Gastrocnemius medialis (tissue), 4 donors: ENCODE measurements at regions of chr12 and their contacts with region 1.

Region 1: DNA sequence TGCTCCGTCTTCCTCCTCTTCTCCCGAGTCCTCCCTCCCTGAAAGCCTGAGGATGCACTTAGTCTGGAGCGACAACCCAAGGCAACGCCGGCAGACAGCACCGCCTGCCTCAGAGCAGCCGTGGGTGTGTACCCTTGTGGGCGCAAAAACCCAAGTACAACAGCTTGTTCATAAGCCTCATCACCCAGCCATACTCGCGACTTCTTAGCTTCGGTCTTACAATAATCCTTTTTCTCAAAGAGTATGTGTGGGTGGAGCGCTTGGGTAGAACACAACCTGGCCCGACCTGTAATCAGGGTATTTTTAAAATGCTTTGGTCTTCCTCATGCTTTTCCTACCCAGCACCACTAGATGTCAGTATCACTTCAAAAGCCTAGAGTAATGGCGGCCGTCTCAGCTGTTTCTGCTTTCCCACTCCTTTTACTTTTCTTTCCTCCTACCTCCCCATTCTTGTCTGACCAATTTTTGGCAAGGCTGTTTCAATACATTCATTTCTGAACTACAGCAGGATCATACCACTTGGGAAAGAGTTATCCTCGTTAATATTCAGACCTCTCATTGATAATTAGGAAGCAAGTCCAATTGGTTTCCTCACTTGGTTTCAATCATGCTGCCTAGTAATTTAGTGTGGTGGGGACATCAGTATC is 198.9 kb downstream of the EPS8 start:
- DNase-seq: peak; percentile 8 to 31
- ATAC-seq: peak; percentile 94 to 95
- H3K4me3 ChIP-seq: peak overlapping the region; percentile 9 to 46 (median 32)
- H3K27ac ChIP-seq: peak overlapping the region in 2 of 4 donors; percentile 18 to 41
- H3K4me1 ChIP-seq: no peaks in the 10 kb centered on the region
- H3K27me3 ChIP-seq: no peaks in the 10 kb centered on the region
- CTCF ChIP-seq: peak; percentile 73 to 92 (median 83)
- POLR2A ChIP-seq: no peak

Region 2: GRCh38 chr12:14782756-14783155 is 807.5 kb before region 1 on chr12:
- in situ Hi-C with region 1: no loop called
- intact Hi-C with region 1: no loop called
- DNase-seq: no peak
- ATAC-seq: no peak
- H3K4me3 ChIP-seq: no peak overlapping the region
- H3K27ac ChIP-seq: no peak overlapping the region
- H3K4me1 ChIP-seq: no peaks in the 10 kb centered on the region
- H3K27me3 ChIP-seq: no peaks in the 10 kb centered on the region
- CTCF ChIP-seq: no peak
- POLR2A ChIP-seq: no peak

Region 3: GRCh38 chr12:15474766-15475165 is 115.5 kb before region 1 on chr12:
- in situ Hi-C with region 1: no loop called
- intact Hi-C with region 1: no loop called
- DNase-seq: no peak
- ATAC-seq: no peak
- H3K4me3 ChIP-seq: no peak overlapping the region
- H3K27ac ChIP-seq: no peak overlapping the region
- H3K4me1 ChIP-seq: no peaks in the 10 kb centered on the region
- H3K27me3 ChIP-seq: no peaks in the 10 kb centered on the region
- CTCF ChIP-seq: no peak
- POLR2A ChIP-seq: no peak

Region 4: DNA sequence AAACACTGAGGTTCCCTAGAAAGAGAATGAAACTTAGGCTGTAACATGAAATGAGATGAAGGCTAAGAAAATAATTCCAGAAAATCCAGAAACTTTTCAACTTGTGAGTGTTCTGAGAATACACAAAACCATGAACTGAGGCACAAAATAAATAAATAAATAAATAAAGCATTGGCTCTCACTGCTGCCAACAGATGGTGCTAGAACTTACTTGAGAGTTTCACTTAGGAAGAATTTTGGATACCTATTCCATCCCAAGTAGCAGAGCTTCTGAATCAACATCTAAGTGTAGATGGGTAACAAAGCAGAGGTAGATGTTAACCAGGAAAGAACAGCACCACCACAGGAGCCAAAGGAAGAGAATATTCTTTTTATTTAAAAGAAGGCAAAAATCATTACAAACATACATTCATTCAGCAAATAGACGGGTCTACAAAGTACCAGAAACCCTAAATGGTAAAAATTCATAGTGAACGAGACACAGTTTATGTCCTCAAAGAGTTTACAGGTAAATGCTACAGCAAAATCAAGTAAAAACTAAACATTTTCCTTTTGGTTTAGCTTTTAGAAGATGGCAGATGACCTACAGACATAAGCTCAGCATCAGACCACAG is 182.2 kb after region 1 on chr12:
- in situ Hi-C with region 1: no loop called
- intact Hi-C with region 1: loop called (anchors 5 kb)
- DNase-seq: no peak
- ATAC-seq: peak in 1 of 2 donors; percentile 41
- H3K4me3 ChIP-seq: no peak overlapping the region
- H3K27ac ChIP-seq: peak overlapping the region in 1 of 4 donors; percentile 3
- H3K4me1 ChIP-seq: peaks cover 0 to 7% of the 10 kb centered on the region in 2 donors
- H3K27me3 ChIP-seq: no peaks in the 10 kb centered on the region
- CTCF ChIP-seq: peak in 4 of 5 experiments; percentile 5 to 52 (median 32)
- POLR2A ChIP-seq: no peak